MCF 10A (cell line): ENCODE measurements at regions of chr10 and their contacts with region 1.

Region 1: GRCh38 chr10:37488792-37489657 is 363.6 kb downstream of the ANKRD30A start:
- DNase-seq: peak; percentile 25
- H3K4me3 Mint-ChIP-seq: peak overlapping the region; percentile 65
- H3K27ac Mint-ChIP-seq: peak overlapping the region; percentile 32
- H3K4me1 Mint-ChIP-seq: peaks cover 12% of the 10 kb centered on the region
- H3K27me3 Mint-ChIP-seq: no peaks in the 10 kb centered on the region
- CTCF ChIP-seq: no peak

Region 2: DNA sequence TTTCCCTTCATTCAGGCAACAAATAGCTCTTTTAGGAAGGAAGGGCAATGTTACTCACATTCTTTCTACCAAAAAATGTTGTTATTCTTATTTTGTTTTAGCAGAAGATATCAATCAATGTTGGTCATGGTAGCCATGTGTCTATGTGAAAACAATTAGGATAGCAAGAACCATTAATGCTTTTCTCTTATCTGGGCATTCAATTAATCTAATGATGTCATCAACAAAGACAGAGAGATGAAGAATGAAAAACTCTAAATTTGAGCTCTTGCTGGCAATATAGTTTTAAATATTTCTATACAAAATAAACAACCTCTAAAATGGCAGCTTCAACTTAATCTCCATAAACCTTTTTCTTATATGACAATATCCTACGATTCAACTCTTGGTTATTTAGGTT is 717.3 kb before region 1 on chr10:
- CTCF ChIA-PET with region 1: no interaction called
- POLR2A ChIA-PET with region 1: no interaction called
- intact Hi-C with region 1: no loop called
- DNase-seq: no peak
- H3K4me3 Mint-ChIP-seq: no peak overlapping the region
- H3K27ac Mint-ChIP-seq: no peak overlapping the region
- H3K4me1 Mint-ChIP-seq: no peaks in the 10 kb centered on the region
- H3K27me3 Mint-ChIP-seq: no peaks in the 10 kb centered on the region
- CTCF ChIP-seq: no peak

Region 3: DNA sequence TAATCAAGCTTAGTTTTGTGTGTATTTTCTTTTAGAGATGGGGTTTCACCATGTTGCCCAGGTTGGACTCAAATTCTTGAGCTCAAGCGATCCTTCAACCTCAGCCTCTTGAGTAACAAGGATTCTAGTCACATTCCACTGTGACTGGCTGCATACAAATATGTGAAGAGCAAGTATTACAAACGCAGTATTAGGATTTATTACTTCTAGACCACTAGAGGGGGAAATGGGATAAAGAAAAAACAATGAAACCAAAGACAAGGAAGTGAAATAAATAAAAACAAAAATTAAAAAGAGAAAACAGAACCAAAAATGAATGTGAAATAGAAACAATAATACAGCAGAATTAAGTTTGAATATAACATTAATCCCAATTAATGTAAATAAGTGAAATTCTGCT is 54.9 kb before region 1 on chr10:
- CTCF ChIA-PET with region 1: interaction called, 63 read pairs
- POLR2A ChIA-PET with region 1: interaction called, 3 read pairs
- intact Hi-C with region 1: no loop called
- DNase-seq: no peak
- H3K4me3 Mint-ChIP-seq: no peak overlapping the region
- H3K27ac Mint-ChIP-seq: no peak overlapping the region
- H3K4me1 Mint-ChIP-seq: peaks cover 9% of the 10 kb centered on the region
- H3K27me3 Mint-ChIP-seq: no peaks in the 10 kb centered on the region
- CTCF ChIP-seq: peak; percentile 33